Vagina (tissue), 2 donors: ENCODE measurements at regions of chr13 and their contacts with region 1.

Region 1: DNA sequence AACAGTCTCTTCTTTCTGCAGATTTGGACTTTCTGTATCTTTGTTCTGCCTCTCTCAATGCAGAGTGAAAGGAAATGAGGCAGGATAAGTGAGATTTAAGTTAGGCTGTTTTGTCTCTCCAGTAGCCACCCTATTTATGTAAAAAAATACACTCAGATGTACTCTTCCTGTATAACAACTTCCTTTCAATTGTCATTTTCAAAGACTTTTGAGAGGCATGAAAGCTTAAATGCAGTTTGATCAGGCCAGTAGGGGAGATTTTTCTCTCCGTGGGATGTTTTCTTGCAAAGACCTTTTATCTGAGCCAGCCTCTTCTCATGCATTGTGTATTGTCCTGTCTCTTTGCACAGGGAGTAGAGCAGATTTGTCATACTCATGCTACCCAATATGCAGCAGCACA is 166.8 kb downstream of the SLITRK5 start:
- DNase-seq: no peak
- H3K4me3 ChIP-seq: no peak overlapping the region
- H3K27ac ChIP-seq: no peak overlapping the region
- H3K4me1 ChIP-seq: no peaks in the 10 kb centered on the region
- H3K27me3 ChIP-seq: no peaks in the 10 kb centered on the region
- CTCF ChIP-seq: no peak
- POLR2A ChIP-seq: no peak

Region 2: DNA sequence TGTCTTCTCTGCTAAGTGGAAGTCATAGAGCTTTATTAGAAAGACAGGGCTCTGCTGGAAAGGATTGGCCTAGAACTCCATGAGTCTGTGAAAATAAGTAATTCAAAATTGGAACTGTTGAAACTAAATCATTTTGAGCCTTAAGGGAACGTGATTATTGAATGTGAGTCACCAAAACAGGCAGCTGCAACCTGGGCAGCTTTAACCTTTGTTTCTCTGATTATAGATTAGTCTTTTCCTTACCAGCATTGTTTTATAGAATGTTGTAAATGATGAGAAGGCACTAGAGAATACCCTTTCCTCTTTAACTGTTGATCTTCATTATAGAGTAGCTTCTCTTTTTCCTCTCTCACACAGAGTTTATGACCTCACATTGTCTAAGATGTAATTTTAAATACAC is 1399.9 kb before region 1 on chr13:
- intact Hi-C with region 1: no loop called
- DNase-seq: no peak
- H3K4me3 ChIP-seq: no peak overlapping the region
- H3K27ac ChIP-seq: no peak overlapping the region
- H3K4me1 ChIP-seq: no peaks in the 10 kb centered on the region
- H3K27me3 ChIP-seq: no peaks in the 10 kb centered on the region
- CTCF ChIP-seq: no peak
- POLR2A ChIP-seq: no peak

Region 3: GRCh38 chr13:87851410-87851809 is 13.5 kb after region 1 on chr13:
- intact Hi-C with region 1: loop called (anchors 1 kb)
- DNase-seq: no peak
- H3K4me3 ChIP-seq: no peak overlapping the region
- H3K27ac ChIP-seq: no peak overlapping the region
- H3K4me1 ChIP-seq: no peaks in the 10 kb centered on the region
- H3K27me3 ChIP-seq: no peaks in the 10 kb centered on the region
- CTCF ChIP-seq: no peak
- POLR2A ChIP-seq: no peak